Activated B cell treated with CpG ODN at 0.5 μM for 24 hours (primary cell): ENCODE measurements at regions of chr11 and their contacts with region 1.

Region 1: DNA sequence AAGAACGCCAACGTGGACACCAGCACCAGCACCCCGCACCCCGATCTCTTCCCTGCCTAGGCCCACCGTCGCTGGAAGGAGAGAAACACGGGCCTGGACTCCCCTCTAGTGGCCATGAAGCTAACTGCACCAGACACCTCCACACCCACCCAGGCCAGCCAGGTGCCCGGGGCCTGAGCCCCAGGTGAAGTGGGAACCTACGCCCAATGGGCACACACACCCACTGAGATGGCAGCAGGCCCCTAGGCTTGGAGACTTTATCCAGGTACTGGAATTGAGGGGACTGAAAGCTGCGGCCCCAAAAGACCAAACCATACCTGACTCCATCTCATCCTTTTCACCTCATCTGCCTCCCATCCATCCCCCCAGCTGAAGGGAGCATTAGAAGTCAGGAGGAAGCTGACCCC is 81.0 kb downstream of the BUD13 start:
- DNase-seq: peak; percentile 39
- ATAC-seq: peak; percentile 87
- H3K4me3 Mint-ChIP-seq: no peak overlapping the region
- H3K27ac Mint-ChIP-seq: no peak overlapping the region
- H3K4me1 Mint-ChIP-seq: peaks cover 2% of the 10 kb centered on the region
- H3K27me3 Mint-ChIP-seq: peaks cover 5% of the 10 kb centered on the region
- CTCF ChIP-seq: peak; percentile 27

Region 2: DNA sequence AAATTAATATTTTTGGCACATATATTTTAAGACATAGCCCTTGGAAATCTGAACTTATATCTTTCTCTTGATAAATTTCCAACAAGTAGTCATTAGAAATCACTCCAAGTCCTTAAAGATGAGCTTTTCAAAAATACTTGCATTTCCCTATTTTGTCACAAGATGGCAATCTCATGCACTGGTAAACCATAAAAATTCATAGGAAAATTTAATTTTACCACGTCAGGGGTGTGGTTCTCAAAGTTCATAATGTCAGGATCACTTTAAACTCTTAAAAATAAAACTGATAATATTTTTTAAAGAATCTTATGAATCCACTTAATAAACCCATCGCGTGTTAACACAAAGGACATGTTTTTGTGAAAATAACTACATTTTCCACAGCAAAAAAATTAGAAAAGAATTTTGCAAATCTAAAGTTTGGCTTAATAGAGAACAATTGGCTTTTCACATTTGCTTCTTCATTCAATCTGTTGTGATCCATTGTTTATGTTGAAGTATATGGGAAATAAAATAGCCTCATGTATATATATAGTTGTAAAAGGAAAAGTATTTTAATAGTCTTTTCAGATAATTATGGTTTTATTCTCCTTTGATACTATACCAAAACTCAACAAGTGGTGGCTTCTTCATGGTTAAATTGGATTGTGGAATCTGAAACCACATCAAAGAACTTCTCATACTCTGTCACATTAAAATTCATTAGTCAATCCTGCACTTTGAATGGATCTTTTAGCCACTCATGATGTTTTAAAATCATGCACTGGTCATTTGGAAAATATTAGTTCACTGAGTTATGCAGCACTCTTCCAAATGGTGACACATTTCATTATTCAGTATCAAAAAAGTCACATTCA is 1356.6 kb before region 1 on chr11:
- CTCF ChIA-PET with region 1: interaction called, 21 read pairs
- POLR2A ChIA-PET with region 1: no interaction called
- intact Hi-C with region 1: loop called (anchors 1 kb)
- DNase-seq: no peak
- ATAC-seq: no peak
- H3K4me3 Mint-ChIP-seq: no peak overlapping the region
- H3K27ac Mint-ChIP-seq: no peak overlapping the region
- H3K4me1 Mint-ChIP-seq: no peaks in the 10 kb centered on the region
- H3K27me3 Mint-ChIP-seq: no peaks in the 10 kb centered on the region
- CTCF ChIP-seq: no peak

Region 3: DNA sequence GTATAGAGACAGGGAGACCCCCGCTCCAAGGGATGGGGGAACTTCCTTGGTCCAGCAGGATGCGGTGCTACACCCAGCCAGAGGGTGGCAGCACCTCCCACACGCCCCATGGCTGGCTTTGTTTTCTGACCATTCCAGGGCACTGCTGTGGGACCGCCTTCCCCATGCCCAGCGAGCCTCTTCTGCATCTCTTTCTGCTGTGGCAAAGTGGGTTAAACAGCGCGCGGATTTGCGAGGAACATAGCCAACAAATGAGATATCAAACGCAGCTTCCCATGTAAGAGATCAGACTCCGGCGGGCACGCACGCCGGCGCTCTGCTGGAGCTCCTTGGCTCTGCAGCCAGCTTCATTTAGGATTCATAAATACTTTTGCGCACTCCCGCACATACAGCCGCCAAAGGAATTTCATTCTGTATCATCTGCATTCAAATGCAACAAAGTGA is 701.7 kb before region 1 on chr11:
- CTCF ChIA-PET with region 1: no interaction called
- POLR2A ChIA-PET with region 1: no interaction called
- intact Hi-C with region 1: loop called (anchors 10 kb)
- DNase-seq: no peak
- ATAC-seq: no peak
- H3K4me3 Mint-ChIP-seq: no peak overlapping the region
- H3K27ac Mint-ChIP-seq: no peak overlapping the region
- H3K4me1 Mint-ChIP-seq: no peaks in the 10 kb centered on the region
- H3K27me3 Mint-ChIP-seq: no peaks in the 10 kb centered on the region
- CTCF ChIP-seq: no peak

Region 4: GRCh38 chr11:116276051-116277044 is 415.4 kb before region 1 on chr11:
- CTCF ChIA-PET with region 1: no interaction called
- POLR2A ChIA-PET with region 1: no interaction called
- intact Hi-C with region 1: loop called (anchors 10 kb)
- DNase-seq: peak; percentile 34
- ATAC-seq: no peak
- H3K4me3 Mint-ChIP-seq: no peak overlapping the region
- H3K27ac Mint-ChIP-seq: no peak overlapping the region
- H3K4me1 Mint-ChIP-seq: no peaks in the 10 kb centered on the region
- H3K27me3 Mint-ChIP-seq: peaks cover 9% of the 10 kb centered on the region
- CTCF ChIP-seq: no peak

Region 5: GRCh38 chr11:116397602-116398084 is 294.1 kb before region 1 on chr11:
- CTCF ChIA-PET with region 1: no interaction called
- POLR2A ChIA-PET with region 1: no interaction called
- intact Hi-C with region 1: no loop called
- DNase-seq: no peak
- ATAC-seq: no peak
- H3K4me3 Mint-ChIP-seq: no peak overlapping the region
- H3K27ac Mint-ChIP-seq: no peak overlapping the region
- H3K4me1 Mint-ChIP-seq: no peaks in the 10 kb centered on the region
- H3K27me3 Mint-ChIP-seq: no peaks in the 10 kb centered on the region
- CTCF ChIP-seq: no peak